ENCODE measurements at regions of chr12 and their contacts with region 1.

Region 1: GRCh38 chr12:2944401-2945047 is 14.7 kb upstream of the TEAD4 start:
- DNase-seq: peak; percentile 37 to 67 (median 65)
- H3K4me3 ChIP-seq: peak overlapping the region in 1 of 7 experiments; percentile 5
- H3K27ac ChIP-seq: no peak overlapping the region
- H3K4me1 ChIP-seq: peaks cover 0 to 2% (median 0%) of the 10 kb centered on the region in 4 experiments
- H3K27me3 ChIP-seq: peaks cover 0 to 6% (median 2%) of the 10 kb centered on the region in 5 experiments

Region 2: GRCh38 chr12:2884810-2885209 is 59.7 kb before region 1 on chr12:
- CTCF ChIA-PET with region 1: interaction called, 10 read pairs
- POLR2A ChIA-PET with region 1: no interaction called
- DNase-seq: no peak
- H3K4me3 ChIP-seq: no peak overlapping the region
- H3K27ac ChIP-seq: no peak overlapping the region
- H3K4me1 ChIP-seq: peaks cover 0 to 6% (median 0%) of the 10 kb centered on the region in 4 experiments
- H3K27me3 ChIP-seq: no peaks in the 10 kb centered on the region

Measured in common myeloid progenitor, CD34-positive (primary cell).